Endothelial cell of umbilical vein (primary cell): ENCODE measurements at regions of chr11 and their contacts with region 1.

Region 1: GRCh38 chr11:128095466-128095981 is 491.8 kb downstream of the ETS1 start:
- DNase-seq: peak; percentile 95
- H3K4me3 ChIP-seq: no peak overlapping the region
- H3K27ac ChIP-seq: peak overlapping the region; percentile 94
- H3K4me1 ChIP-seq: peaks cover 14% of the 10 kb centered on the region
- H3K27me3 ChIP-seq: no peaks in the 10 kb centered on the region
- CTCF ChIP-seq: peak; percentile 14 to 28
- POLR2A ChIP-seq: no peak

Region 2: DNA sequence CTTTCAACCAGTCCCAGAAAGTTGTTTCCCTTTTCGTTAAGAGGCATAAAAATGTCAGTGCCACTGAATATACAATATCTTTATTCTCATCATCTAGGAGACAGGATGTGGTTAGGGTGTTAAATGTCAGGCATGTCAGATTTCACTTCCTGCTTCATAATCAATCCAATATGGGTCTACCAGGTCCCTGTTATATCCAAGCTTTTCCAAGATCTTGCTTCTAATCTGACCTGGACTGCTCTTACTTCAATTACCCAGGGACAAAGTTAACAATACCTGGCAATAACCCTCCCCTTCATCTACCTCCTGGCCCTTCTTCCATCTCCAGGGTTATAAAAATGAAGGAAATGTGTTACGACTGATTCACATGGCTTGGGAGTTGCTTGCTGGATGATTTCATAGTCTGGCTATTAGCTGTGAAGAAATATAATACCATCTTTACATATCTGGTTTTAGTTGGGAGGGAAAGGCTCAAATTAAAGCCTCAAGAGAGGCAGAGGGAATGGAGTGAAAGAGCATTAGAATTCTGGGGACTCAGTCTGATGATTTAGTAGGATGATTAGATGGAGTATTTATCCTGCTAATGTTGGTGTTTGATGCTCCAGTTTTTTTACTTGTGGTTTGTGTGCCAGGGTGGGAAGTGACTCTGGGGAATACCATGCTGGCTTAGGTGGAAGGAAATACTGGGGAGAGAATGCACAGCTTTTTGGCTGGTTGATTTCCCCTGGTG is 42.4 kb before region 1 on chr11:
- CTCF ChIA-PET with region 1: no interaction called
- POLR2A ChIA-PET with region 1: no interaction called
- dilution Hi-C with region 1: no loop called
- intact Hi-C with region 1: loop called (anchors 2 kb)
- DNase-seq: peak; percentile 72
- H3K4me3 ChIP-seq: no peak overlapping the region
- H3K27ac ChIP-seq: peak overlapping the region; percentile 79
- H3K4me1 ChIP-seq: peaks cover 21% of the 10 kb centered on the region
- H3K27me3 ChIP-seq: no peaks in the 10 kb centered on the region
- CTCF ChIP-seq: no peak
- POLR2A ChIP-seq: no peak

Region 3: GRCh38 chr11:128342511-128343134 is 247.1 kb after region 1 on chr11:
- CTCF ChIA-PET with region 1: no interaction called
- POLR2A ChIA-PET with region 1: no interaction called
- dilution Hi-C with region 1: no loop called
- intact Hi-C with region 1: no loop called
- DNase-seq: peak; percentile 98
- H3K4me3 ChIP-seq: no peak overlapping the region
- H3K27ac ChIP-seq: peak overlapping the region; percentile 83
- H3K4me1 ChIP-seq: peaks cover 31% of the 10 kb centered on the region
- H3K27me3 ChIP-seq: no peaks in the 10 kb centered on the region
- CTCF ChIP-seq: no peak
- POLR2A ChIP-seq: peak; percentile 47

Region 4: GRCh38 chr11:128399251-128400121 is 304.0 kb after region 1 on chr11:
- CTCF ChIA-PET with region 1: no interaction called
- POLR2A ChIA-PET with region 1: no interaction called
- dilution Hi-C with region 1: no loop called
- intact Hi-C with region 1: no loop called
- DNase-seq: peak; percentile 50
- H3K4me3 ChIP-seq: no peak overlapping the region
- H3K27ac ChIP-seq: no peak overlapping the region
- H3K4me1 ChIP-seq: peaks cover 12% of the 10 kb centered on the region
- H3K27me3 ChIP-seq: no peaks in the 10 kb centered on the region
- CTCF ChIP-seq: no peak
- POLR2A ChIP-seq: no peak

Region 5: GRCh38 chr11:128522055-128522942 is 426.8 kb after region 1 on chr11:
- CTCF ChIA-PET with region 1: no interaction called
- POLR2A ChIA-PET with region 1: no interaction called
- dilution Hi-C with region 1: no loop called
- intact Hi-C with region 1: no loop called
- DNase-seq: peak; percentile 97
- H3K4me3 ChIP-seq: peak overlapping the region; percentile 68 to 98 (median 97)
- H3K27ac ChIP-seq: peak overlapping the region; percentile 99
- H3K4me1 ChIP-seq: peaks cover 52% of the 10 kb centered on the region
- H3K27me3 ChIP-seq: no peaks in the 10 kb centered on the region
- CTCF ChIP-seq: no peak
- POLR2A ChIP-seq: peak; percentile 69

Region 6: DNA sequence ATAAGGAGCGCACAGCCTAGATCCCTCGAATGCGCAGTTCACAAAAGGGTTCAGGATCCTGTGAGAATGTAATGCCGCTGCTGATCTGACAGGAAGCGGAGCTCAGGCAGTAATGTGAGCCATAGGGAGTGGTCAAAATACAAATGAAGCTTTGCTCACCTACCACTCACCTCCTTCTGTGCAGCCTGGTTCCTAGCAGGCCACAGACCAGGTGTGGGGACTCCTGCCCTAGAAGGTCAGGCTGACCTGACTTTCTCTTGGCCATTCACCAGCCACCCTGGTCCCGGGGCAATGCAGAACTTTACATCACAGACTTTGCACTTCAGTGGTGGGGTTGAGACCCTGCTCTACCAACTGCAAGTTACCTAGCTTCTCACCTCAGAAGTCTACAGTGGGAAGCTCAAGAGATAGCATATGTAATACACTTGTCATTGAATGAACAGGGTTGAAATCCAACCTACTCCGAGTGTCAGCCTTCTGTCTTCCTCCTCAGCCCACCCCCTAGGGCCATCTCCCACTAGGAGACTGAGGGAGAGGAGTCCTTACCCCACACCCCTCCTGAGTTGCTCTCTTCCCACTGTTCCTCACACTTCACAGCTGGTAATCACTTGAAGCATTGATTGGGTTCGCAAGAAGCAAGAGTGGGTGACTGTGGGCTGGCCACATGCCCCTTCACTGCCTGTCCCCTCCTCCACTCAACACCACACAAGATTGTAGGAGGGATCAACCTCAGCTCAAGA is 773.5 kb after region 1 on chr11:
- CTCF ChIA-PET with region 1: no interaction called
- POLR2A ChIA-PET with region 1: no interaction called
- dilution Hi-C with region 1: no loop called
- intact Hi-C with region 1: loop called (anchors 5 kb)
- DNase-seq: no peak
- H3K4me3 ChIP-seq: no peak overlapping the region
- H3K27ac ChIP-seq: no peak overlapping the region
- H3K4me1 ChIP-seq: no peaks in the 10 kb centered on the region
- H3K27me3 ChIP-seq: peaks cover 12 to 29% of the 10 kb centered on the region in 2 experiments
- CTCF ChIP-seq: no peak
- POLR2A ChIP-seq: no peak